ENCODE measurements at regions of chr5 and their contacts with region 1.

Region 1: DNA sequence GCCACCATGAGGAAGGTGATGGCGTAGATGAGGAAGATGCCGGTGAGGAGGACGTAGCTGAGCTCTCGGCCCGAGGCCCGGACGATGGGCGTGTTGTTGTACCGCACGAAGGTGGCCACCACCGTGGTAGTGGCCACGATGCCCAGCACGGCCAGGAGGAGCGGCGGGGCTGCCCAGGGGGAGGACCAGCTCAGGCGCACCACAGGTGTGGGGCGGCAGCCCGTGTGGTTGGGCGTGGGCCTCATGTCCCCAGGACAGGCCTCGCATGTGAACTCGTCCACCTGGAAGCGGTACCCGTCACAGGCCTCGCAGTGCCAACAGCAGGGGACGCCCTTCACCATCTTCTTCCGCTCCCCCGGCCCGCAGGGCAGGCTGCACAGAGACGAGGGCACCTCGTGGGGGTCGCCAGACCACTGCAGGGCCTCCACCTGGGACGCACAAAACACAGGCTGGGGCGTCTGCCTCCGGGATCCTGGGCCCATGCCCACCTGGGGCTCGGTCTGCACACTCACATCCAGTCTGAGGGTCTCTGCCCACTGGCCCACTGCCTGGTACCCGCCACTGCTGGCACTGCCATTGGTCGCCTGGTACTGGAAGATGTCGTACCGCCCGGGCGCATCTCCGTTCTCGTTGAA is 8.7 kb downstream of the GRM6 start:
- DNase-seq: no peak
- H3K4me3 ChIP-seq: no peak overlapping the region
- H3K27ac ChIP-seq: no peak overlapping the region
- H3K4me1 ChIP-seq: no peaks in the 10 kb centered on the region
- H3K27me3 ChIP-seq: no peaks in the 10 kb centered on the region
- CTCF ChIP-seq: no peak
- EP300 ChIP-seq: no peak
- POLR2A ChIP-seq: no peak

Region 2: DNA sequence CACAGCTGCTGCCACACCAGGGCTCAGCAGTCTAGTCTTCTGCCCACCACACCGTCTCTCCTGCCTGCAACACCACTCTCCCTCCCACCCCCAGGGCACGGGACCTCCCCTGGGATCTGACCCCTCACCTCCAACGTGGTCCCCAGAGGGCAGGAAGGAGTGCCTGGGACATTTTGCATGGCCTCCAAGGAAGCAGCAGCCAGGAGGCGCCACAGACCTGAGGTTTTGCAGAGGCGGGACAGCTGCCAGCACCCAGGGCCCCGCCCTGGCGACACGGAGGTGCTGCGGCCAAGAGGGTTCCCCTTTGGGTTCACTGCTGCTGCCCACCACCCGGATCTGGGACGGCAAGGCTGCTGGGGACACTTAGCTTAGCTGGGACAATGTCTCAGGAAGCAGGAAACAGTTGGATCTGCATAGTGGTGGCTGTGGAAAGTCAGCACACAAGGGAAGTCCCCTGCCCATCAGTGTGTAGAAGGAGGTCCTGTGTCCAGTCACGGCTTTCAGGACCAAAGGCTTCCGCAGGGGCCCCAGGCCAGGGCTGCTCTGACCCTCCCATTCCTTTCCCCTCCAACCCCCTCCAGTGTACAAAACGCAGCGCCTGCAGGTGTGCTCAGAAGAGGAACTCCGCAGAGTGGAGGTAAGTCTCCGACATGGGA is 1004.2 kb before region 1 on chr5:
- in situ Hi-C with region 1: no loop called
- intact Hi-C with region 1: loop called (anchors 5 kb)
- DNase-seq: no peak
- H3K4me3 ChIP-seq: no peak overlapping the region
- H3K27ac ChIP-seq: no peak overlapping the region
- H3K4me1 ChIP-seq: no peaks in the 10 kb centered on the region
- H3K27me3 ChIP-seq: peaks cover 69% of the 10 kb centered on the region
- CTCF ChIP-seq: peak in 2 of 5 experiments; percentile 20 to 27
- EP300 ChIP-seq: no peak
- POLR2A ChIP-seq: no peak

Measured in transverse colon (tissue), 4 donors.